ENCODE measurements at regions of chr22 and their contacts with region 1.

Region 1: DNA sequence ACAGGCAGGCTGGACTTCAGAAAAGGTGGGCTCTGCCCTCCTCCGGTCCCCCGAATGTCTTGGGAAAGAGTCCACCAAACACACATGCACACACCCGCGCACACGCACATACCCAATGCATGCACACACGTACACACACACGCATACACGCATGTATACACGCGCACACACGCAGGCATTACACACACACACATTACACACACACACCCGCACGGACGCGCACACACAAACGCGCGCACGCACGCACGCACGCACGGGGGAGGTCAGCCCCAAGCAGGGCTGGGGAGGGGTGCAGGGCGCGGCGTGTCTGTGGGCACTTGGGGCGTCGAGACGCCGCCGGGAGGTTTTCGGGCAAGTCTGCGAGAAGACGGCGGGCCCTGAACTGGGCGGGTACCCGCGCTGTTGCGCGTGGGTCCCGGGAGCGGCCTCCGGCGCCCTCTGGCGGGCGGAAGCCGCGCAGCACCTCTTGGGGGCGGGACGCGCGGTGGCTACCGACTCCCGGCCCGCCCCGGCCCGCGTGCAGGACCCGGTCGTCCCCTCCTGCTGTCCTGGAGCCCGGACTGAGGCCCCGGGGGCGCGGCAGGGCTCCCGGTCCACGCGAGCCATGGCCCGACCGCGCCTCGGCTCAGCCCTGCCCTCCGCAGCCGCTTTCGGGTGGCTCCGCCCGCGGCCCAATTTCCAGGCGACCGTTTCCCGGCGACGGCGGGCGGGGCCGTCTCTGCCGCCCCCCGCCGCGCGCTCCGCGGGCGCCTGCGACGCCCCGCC is 3.6 kb downstream of the SEPTIN5 start:
- DNase-seq: peak; percentile 64
- H3K4me3 Mint-ChIP-seq: peak overlapping the region; percentile 68
- H3K27ac Mint-ChIP-seq: no peak overlapping the region
- H3K4me1 Mint-ChIP-seq: peaks cover 3% of the 10 kb centered on the region
- H3K27me3 Mint-ChIP-seq: no peaks in the 10 kb centered on the region
- CTCF ChIP-seq: peak; percentile 96

Region 2: DNA sequence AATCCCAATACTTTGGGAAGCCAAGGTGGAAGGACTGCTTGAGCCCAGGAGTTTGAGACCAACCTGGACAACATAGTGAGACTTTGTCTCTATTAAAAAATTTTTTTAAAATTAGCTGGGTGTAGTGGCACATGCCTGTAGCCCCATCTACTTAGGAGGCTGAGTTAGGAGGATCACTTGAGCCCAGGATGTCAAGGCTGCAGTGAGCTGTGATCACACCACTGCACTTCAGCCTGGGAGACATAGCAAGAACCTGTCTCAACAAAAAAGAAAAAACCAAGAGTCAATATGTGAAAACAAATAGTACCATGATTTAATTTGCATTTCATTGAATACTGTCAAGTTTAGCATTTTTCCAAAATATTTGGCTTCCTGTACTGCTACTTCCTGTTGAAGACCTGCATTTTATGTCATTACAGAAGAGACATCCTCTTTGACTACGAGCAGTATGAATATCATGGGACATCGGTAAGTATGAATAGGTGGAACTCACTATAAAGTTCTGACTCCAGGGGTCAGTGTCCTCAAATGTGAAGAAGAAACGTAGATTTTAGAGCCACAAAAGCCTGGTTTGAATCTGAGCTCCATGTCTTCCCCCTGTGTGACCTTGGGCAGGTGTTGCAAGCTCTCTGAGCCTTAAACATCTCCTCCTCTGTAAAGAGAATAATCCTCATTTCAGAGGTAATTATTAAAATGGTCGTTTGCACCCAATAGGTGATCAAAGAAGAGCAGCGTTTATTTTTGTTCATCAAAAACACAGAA is 222.1 kb before region 1 on chr22:
- CTCF ChIA-PET with region 1: no interaction called
- POLR2A ChIA-PET with region 1: no interaction called
- intact Hi-C with region 1: loop called (anchors 5 kb)
- DNase-seq: peak; percentile 32
- H3K4me3 Mint-ChIP-seq: no peak overlapping the region
- H3K27ac Mint-ChIP-seq: no peak overlapping the region
- H3K4me1 Mint-ChIP-seq: peaks cover 6% of the 10 kb centered on the region
- H3K27me3 Mint-ChIP-seq: no peaks in the 10 kb centered on the region
- CTCF ChIP-seq: peak; percentile 15

Region 3: GRCh38 chr22:19679522-19680101 is 38.3 kb before region 1 on chr22:
- CTCF ChIA-PET with region 1: interaction called, 4 read pairs
- POLR2A ChIA-PET with region 1: no interaction called
- intact Hi-C with region 1: loop called (anchors 5 kb)
- DNase-seq: peak; percentile 11
- H3K4me3 Mint-ChIP-seq: no peak overlapping the region
- H3K27ac Mint-ChIP-seq: no peak overlapping the region
- H3K4me1 Mint-ChIP-seq: peaks cover under 1% of the 10 kb centered on the region
- H3K27me3 Mint-ChIP-seq: peaks cover 53% of the 10 kb centered on the region
- CTCF ChIP-seq: peak; percentile 67

Measured in MCF 10A (cell line).